Posterior cingulate gyrus (tissue), 11 donors: ENCODE measurements at regions of chr18 and their contacts with region 1.

Region 1: DNA sequence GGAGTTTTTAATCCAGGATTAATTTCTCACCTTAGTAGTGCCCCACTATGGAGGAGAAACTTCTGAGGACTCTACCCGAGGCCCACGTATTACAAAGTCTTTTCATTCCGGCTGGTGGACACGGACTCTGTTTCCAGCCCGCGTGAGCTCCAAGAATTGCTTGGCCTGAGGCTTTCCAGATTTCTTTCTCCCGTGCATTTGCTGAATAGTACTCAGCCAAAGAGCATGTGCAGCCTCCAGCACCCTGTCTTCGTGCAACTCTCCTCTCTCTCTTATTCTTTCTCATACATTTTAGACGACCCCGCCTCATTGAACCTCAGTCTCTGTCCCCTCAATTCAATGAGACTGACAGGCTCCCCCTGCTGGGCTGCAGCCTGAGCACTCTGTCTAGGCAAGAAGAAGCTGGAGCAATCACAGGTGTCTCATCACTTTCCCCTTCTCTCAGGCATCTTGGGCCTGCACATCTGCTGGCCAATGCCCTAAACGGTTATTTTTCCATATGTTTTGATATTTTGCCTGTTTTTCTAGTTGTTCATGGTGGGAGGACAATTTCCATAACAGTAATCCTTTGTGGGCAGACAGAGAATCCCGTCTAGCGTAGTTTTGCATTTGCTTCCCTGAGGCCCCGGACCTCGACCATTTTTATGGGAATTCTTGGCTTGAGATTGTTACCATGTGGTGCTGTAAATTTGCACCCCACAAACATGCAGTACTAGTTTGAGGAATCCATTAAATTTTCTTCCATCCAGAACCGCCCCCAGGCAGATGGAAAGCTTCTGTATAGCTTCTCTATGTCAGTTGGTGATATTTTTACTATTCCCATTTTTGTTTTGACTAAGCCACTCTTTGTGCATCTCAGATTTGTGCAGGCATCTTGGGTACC is 50.1 kb upstream of the LPIN2 start:
- DNase-seq: peak; percentile 31 to 94 (median 73)

Region 2: DNA sequence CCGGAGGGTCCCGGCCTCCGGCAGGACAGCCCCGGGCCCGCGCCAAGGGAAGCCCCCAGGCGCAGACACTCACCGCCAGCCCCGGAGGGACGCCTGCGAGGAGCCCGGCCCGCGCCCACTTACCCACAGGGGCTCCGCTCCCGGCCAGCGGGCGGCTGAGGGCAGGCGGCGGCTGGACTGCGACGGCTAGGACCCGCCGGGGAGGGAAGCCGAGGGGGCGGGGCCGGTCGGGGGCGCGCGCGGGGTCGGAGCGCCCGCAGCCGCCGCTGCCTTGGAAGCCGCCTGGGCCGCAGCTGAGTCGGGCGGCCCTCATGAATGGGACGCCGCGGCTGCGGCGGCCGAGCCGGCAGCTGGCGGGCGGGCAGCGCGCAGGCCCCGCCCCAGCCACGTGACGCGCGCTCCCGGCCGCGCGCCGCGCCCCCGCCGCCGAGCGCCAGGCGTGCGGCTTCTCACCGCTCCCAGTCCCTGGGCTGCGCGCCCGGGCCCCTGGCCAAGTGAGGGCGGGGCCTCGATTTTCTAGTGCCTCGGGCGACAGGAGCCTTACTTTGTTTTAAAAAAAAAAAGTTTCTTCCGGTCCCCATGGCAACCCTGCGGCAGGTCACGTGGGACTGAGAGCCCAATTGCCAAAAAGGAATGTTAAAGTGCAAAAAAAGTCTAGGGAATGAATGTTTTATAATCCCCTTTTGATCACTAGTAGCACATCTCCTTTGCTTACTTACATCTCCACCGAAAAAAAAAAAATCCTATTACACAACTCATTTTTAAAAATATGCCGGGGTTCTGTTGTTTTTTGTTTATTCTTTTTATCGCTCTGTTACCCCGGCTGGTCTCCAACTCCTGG is 49.9 kb before region 1 on chr18 and contains the start of gene LPIN2:
- intact Hi-C with region 1: loop called (anchors 2 kb)
- DNase-seq: peak; percentile 90 to 99 (median 95)

Region 3: DNA sequence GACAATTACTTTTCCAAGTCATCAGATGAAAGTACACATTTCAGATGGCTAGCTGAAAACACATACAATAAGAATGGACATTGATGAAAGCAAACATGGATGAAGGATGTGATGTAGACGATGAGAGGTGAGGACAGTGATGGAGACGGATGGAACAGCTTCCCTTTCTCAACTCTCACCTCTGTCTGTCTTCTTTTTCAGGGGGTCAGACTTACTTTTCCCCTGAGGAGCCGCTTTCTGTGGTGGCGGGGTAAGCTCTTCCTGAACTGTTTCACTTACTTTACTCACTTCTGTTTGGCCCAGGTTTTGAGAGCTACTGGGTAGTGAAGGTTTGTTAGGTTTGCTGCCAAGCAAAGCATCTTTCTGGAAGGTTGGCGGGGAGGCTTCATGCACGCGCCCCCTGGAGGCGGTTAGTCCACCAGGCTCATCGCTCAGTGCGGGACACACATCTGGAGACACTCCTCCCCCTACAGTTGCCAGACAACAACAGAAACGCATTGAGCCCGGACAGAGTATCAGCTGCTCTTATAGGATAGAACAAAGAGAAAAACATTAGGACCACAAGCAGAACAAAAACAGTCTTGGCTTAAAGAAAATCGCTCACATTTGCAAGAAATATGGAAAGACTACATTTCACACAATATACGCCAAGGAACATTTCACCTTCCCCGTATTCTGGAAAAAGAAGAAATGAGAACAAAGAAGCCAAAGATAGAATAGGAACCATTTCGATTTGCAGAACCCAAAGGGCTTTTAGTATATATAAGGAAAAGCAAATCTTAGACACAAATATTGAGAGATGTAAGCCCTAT is 66.2 kb after region 1 on chr18:
- intact Hi-C with region 1: loop called (anchors 10 kb)
- DNase-seq: peak; percentile 61 to 97 (median 83)

Region 4: DNA sequence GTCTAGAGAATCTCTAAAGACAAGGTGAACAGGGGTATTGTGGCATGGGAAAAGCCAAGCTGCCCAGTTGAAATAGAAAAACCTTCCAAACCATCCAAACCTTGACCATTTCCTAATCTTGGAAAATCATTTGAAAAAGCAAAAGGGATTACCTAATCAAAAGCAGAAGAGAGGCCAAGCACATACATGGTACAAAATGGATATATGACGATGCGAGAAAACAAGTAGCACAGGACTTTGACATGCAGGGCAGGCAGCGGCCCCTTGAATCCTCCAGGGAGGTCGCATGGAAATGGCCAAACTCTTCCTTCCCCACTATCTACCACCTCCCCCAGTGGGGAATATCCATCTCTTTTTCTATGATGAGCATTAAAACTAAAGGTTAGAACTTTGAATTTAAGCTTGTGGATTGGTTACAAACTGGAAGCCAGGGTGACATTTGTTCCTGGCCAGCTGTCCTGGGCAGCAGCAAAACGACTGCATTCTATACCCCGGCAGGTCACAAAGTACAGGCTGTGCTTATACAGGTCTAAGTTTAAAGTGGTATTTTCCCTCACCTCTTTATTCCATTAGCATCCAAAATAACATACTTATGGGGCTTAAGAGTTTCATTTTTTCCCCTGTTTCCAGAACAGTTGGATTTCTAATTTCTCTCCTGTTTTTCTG is 132.0 kb after region 1 on chr18:
- intact Hi-C with region 1: no loop called
- DNase-seq: no peak

Region 5: GRCh38 chr18:3481696-3482210 is 418.7 kb after region 1 on chr18:
- intact Hi-C with region 1: no loop called
- DNase-seq: peak in 1 of 10 donors; percentile 30